Endothelial cell of umbilical vein (primary cell): ENCODE measurements at regions of chr1 and their contacts with region 1.

Region 1: DNA sequence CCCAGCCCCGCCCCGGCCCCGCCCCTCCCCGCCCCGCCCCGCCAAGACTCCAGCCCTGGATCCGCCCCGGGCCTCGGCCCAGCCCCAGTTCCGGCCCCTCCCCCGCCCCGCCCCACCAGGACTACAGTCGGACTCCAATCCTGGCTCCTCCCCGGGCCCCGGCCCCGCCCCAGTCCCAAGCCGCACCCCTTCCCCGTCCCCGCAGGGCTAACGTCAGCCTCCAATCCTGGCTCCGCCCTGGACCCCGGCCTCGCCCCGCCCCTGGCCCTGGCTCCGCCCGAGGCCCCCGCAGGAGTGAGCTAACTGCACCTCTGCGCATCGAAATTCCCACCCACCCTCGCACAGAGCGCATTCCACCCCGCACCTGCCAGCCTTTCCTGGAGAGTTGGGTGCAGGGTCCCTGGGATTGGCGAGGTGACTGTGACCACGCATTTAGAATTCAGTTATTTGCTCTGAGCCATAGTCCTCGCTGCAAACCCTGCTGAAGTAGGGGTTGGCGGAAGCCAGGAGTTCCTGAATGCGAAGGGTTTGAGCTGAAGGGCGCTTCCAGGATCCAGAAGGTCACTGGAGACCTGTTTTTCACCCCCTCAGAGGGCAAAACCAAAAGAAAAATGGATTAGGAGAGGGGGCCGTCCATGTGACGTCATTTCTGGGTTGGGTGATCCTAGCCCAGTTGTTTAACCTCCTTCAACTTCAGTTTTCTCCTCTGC is 588 bp upstream of the IGSF8 start:
- DNase-seq: peak; percentile 91
- H3K4me3 ChIP-seq: peak overlapping the region; percentile 63 to 82 (median 79)
- H3K27ac ChIP-seq: peak overlapping the region; percentile 36
- H3K4me1 ChIP-seq: peaks cover 7% of the 10 kb centered on the region
- H3K27me3 ChIP-seq: peaks cover 14 to 16% of the 10 kb centered on the region in 2 experiments
- CTCF ChIP-seq: no peak
- POLR2A ChIP-seq: no peak

Region 2: GRCh38 chr1:159936273-159936904 is 162.6 kb before region 1 on chr1:
- CTCF ChIA-PET with region 1: no interaction called
- POLR2A ChIA-PET with region 1: no interaction called
- dilution Hi-C with region 1: no loop called
- intact Hi-C with region 1: loop called (anchors 5 kb)
- DNase-seq: peak; percentile 47
- H3K4me3 ChIP-seq: no peak overlapping the region
- H3K27ac ChIP-seq: no peak overlapping the region
- H3K4me1 ChIP-seq: no peaks in the 10 kb centered on the region
- H3K27me3 ChIP-seq: peaks cover 0 to 14% of the 10 kb centered on the region in 2 experiments
- CTCF ChIP-seq: peak; percentile 86 to 98
- POLR2A ChIP-seq: no peak

Region 3: DNA sequence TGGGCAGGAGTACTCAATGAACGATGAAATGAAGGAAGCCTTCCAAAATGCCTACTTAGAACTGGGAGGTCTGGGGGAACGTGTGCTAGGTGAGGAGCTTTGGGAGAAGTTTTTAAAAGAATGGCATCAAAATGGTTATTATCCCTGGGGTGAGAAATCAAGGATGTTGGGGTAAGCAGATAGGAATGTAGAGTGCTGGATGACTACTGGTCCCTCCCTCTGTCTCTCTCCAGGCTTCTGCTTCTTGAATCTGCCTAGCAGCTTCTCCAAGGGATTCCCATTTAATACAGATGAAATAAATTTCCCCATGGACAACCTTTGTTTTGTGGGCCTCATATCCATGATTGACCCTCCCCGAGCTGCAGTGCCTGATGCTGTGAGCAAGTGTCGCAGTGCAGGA is 72.3 kb after region 1 on chr1:
- CTCF ChIA-PET with region 1: no interaction called
- POLR2A ChIA-PET with region 1: no interaction called
- dilution Hi-C with region 1: no loop called
- intact Hi-C with region 1: no loop called
- DNase-seq: no peak
- H3K4me3 ChIP-seq: no peak overlapping the region
- H3K27ac ChIP-seq: no peak overlapping the region
- H3K4me1 ChIP-seq: no peaks in the 10 kb centered on the region
- H3K27me3 ChIP-seq: peaks cover 7 to 17% of the 10 kb centered on the region in 2 experiments
- CTCF ChIP-seq: no peak
- POLR2A ChIP-seq: no peak

Region 4: GRCh38 chr1:160205242-160206035 is 106.4 kb after region 1 on chr1 and contains the start of gene PEA15:
- CTCF ChIA-PET with region 1: no interaction called
- POLR2A ChIA-PET with region 1: no interaction called
- dilution Hi-C with region 1: no loop called
- intact Hi-C with region 1: loop called (anchors 1 kb)
- DNase-seq: peak; percentile 54
- H3K4me3 ChIP-seq: peak within 1 kb of the TSS; percentile 55 to 81 (median 72)
- H3K27ac ChIP-seq: peak within 1 kb of the TSS; percentile 73
- H3K4me1 ChIP-seq: peaks cover 45% of the 10 kb centered on the region
- H3K27me3 ChIP-seq: no peaks in the 10 kb centered on the region
- CTCF ChIP-seq: no peak
- POLR2A ChIP-seq: no peak
- total RNA-seq, gene PEA15: 250 and 270 TPM in 2 replicates

Region 5: GRCh38 chr1:160244209-160244608 is 145.2 kb after region 1 on chr1:
- CTCF ChIA-PET with region 1: no interaction called
- POLR2A ChIA-PET with region 1: no interaction called
- dilution Hi-C with region 1: no loop called
- intact Hi-C with region 1: no loop called
- DNase-seq: peak; percentile 28
- H3K4me3 ChIP-seq: no peak overlapping the region
- H3K27ac ChIP-seq: no peak overlapping the region
- H3K4me1 ChIP-seq: peaks cover 5% of the 10 kb centered on the region
- H3K27me3 ChIP-seq: no peaks in the 10 kb centered on the region
- CTCF ChIP-seq: no peak
- POLR2A ChIP-seq: no peak

Region 6: DNA sequence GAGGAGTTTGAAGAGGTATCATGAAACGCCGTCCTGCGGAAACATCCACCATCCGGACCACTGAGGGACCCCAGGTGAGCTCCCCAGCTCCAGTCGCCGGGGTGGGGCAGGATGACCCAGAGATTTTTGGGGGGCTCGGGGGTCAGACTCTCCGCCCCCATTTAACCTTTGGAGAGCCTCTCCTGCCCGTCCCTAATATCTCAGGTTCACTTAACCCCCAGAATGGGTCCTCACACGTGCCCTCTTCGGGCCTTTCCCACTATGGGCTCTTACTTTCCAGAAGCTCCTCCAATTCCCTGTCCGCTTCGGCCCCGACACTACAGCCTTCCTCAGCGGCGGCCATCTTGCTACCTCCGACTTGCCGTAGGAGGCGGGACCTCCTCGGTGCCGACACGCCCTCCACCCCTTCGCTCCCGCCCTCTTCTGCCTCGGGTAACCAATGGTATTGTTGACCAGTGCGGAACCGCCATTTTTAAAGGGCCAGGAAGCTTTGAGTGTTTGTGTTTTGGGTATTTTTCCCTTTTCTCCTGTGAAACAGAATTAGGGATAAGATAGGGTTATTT is 185.9 kb after region 1 on chr1 and contains the start of gene PEX19:
- CTCF ChIA-PET with region 1: interaction called, 141 read pairs
- POLR2A ChIA-PET with region 1: no interaction called
- dilution Hi-C with region 1: no loop called
- intact Hi-C with region 1: loop called (anchors 1 kb)
- DNase-seq: peak; percentile 95
- H3K4me3 ChIP-seq: peak within 1 kb of the TSS; percentile 65 to 83 (median 72)
- H3K27ac ChIP-seq: peak within 1 kb of the TSS; percentile 45
- H3K4me1 ChIP-seq: peaks cover 9% of the 10 kb centered on the region
- H3K27me3 ChIP-seq: no peaks in the 10 kb centered on the region
- CTCF ChIP-seq: no peak
- POLR2A ChIP-seq: peak; percentile 87
- total RNA-seq, gene PEX19: 31.5 and 38.4 TPM in 2 replicates

Region 7: DNA sequence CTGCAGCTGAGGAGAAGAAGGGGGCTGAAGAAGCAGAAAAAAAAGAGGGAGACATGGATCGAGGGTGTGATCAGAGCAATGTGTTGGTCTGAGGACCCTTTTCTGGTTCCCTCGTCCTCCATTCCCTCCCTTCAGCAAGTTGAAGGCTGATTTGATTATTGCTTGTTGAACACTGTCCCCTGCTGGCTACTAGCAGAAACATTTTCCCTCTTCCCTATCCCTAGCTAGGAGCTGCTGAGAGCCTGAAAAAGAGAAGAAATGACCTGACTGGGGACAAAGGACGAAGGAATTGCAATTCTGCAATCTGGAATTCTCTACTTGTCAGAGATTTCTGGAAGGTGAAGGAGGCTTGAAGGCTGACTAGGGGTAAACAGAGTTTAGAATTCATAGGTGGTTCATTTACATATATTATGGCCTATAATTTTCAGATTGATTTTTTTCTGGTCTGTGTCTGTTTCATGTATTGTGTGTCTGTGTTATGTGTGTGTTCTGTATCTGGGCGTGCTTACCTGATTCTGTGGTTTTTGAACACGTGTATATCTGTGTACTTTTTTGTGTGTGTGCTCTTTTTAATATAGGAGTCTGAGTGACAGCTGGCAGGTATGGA is 277.6 kb after region 1 on chr1:
- CTCF ChIA-PET with region 1: interaction called, 98 read pairs
- POLR2A ChIA-PET with region 1: no interaction called
- dilution Hi-C with region 1: no loop called
- intact Hi-C with region 1: loop called (anchors 1 kb)
- DNase-seq: peak; percentile 65
- H3K4me3 ChIP-seq: no peak overlapping the region
- H3K27ac ChIP-seq: no peak overlapping the region
- H3K4me1 ChIP-seq: no peaks in the 10 kb centered on the region
- H3K27me3 ChIP-seq: peaks cover 20 to 26% of the 10 kb centered on the region in 2 experiments
- CTCF ChIP-seq: peak; percentile 83 to 92
- POLR2A ChIP-seq: no peak